Activated T-helper 2 cell treated with anti-CD3 and anti-CD28 coated beads, Interferon-gamma antibody, Interleukin-2, Interleukin-4, amounts not matched to agents 10 μg/mL and 5 μg/mL and 100 μg/mL, durations not matched to agents 14 hours and 24 hours and 36 hours (primary cell): ENCODE measurements at regions of chr3 and their contacts with region 1.

Region 1: DNA sequence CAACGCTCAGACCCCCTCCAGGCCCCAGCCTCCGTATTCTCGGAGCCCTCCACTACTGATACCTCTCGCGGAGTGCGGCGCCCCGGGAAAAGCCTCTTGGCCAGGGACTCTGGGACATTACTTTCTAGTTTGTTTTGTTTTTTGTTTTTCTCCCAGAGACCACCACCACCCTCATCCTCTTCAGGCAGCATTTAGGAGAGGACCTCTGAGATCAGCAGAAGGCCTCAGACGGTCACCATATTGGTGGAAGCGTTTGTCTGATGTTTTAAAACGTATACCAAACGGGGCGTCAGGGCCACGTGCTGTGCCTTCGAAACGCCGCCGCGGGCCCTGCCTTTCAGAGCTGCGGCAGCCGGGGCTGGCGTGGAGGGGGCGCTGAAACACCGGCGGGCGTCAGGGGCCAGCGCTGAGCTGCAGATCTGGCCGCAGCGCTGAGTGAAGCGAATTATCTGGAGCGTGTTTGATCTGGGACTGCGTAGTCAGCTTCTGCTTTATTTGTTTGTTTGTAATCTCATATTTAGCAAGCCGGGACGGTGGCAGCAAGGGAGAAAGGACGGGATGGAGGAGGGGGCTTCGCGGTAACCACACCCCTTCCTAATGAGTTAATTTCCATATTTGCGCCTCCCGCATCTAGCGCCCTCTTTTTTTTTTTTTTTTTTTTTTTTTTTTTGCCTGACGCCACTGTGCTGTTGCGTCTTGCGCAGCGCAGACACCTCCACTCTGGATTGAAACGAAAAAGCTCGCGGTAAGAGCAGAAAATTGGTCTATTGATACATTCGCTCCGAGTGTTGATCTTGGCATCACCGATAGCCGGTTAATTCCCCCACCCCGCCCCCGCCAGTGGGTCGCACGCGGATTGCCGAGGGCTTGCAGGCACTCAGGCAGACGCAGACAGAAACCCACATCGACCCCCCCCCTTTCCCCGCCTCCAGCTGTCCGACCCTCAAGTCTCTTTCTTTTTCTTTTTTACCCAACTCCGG is 14.9 kb downstream of the SOX2 start:
- DNase-seq: no peak
- H3K4me3 Mint-ChIP-seq: peak overlapping the region; percentile 15
- H3K27ac Mint-ChIP-seq: no peak overlapping the region
- H3K4me1 Mint-ChIP-seq: peaks cover 6% of the 10 kb centered on the region
- H3K27me3 Mint-ChIP-seq: peaks cover 86% of the 10 kb centered on the region

Region 2: DNA sequence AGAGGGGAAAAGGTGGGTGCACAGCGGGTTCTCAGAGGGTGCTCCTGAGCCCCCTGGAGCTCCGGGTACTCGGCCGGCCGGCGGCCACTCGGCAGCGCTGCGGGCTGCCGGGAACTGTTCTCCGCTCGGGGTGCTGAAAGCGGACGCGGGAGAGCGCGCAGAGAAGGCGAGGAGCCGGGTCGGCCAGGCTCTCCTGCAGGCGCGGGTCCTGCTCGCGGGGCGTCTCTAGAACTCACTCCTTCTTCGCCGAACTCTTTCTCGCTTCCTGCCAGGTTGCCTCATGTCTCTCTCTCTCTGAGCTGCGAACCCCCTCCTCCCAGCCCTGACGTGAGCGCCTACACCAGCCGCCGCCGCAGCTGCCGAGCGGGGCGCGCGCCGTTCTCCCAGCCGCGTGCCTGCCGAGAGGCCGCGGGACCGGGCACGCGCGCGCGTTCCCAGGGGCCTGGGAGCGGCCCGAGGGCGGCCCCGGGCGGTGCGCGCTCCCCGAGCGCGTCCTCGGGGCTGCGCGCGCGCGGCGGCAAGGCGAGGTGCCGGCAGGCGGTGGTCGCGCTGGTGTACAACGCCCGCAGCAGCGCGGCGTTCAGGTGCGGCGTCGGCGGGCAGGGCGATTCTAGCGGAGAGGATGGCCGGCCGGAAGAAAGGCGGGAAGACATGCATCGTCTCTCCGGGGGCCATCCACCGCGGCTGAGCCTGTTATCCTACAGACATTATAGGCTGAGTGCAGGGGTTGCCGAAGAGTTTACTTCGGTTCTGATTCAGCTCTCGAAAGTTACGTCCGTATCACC is 1689.8 kb before region 1 on chr3 and contains the start of gene PEX5L:
- intact Hi-C with region 1: loop called (anchors 10 kb)
- DNase-seq: peak; percentile 41
- H3K4me3 Mint-ChIP-seq: peak within 1 kb of the TSS; percentile 76
- H3K27ac Mint-ChIP-seq: no peak within 1 kb of the TSS
- H3K4me1 Mint-ChIP-seq: peaks cover 12% of the 10 kb centered on the region
- H3K27me3 Mint-ChIP-seq: peaks cover 47% of the 10 kb centered on the region
- total RNA-seq, gene PEX5L: 0.05 and 0.25 TPM in 2 replicates

Region 3: GRCh38 chr3:181442066-181442465 is 284.6 kb before region 1 on chr3:
- intact Hi-C with region 1: no loop called
- DNase-seq: no peak
- H3K4me3 Mint-ChIP-seq: no peak overlapping the region
- H3K27ac Mint-ChIP-seq: no peak overlapping the region
- H3K4me1 Mint-ChIP-seq: no peaks in the 10 kb centered on the region
- H3K27me3 Mint-ChIP-seq: no peaks in the 10 kb centered on the region

Region 4: GRCh38 chr3:181709537-181710279 is 16.9 kb before region 1 on chr3:
- intact Hi-C with region 1: loop called (anchors 1 kb)
- DNase-seq: peak; percentile 40
- H3K4me3 Mint-ChIP-seq: peak overlapping the region; percentile 45
- H3K27ac Mint-ChIP-seq: no peak overlapping the region
- H3K4me1 Mint-ChIP-seq: peaks cover 6% of the 10 kb centered on the region
- H3K27me3 Mint-ChIP-seq: peaks cover 62% of the 10 kb centered on the region